A673 (cell line): ENCODE measurements at regions of chr17 and their contacts with region 1.

Region 1: DNA sequence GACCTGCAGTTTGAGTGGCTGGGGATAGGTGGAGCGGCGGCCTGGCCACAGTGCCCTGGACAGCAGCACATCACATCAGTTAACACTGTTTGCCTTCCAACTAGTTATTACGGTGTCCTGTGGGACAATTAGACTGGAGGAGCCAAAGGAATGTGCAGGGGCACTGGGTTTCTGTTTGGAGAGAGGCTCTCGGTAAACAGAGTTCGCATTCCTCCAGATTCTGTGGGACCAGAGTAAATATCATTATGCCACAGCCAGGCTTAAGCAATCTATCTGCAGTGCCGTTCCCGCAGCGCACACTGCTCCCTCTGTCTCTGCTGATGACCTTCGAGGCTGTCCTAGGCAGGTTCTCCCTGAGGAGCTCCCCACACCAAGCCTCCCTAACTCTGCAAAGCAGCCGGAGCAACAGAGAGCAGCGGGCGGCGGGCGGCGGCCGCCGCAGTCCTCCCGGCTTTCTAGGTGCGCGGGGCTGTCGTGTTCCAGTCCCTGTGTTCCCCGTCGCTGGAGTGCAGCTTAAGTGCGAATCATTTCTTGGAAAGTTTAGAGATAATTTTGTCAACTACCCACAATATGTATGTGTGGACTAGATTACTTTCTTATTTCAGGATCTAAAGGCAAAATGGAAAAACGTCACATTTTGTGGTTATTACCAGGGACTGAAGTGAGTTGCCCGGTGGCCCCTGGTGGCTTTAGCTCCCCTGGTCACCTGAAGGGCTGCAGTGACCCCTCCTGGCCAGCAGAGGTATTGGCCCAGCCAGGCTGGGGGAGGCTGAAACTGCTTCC is 43.2 kb downstream of the PGS1 start:
- DNase-seq: peak; percentile 64
- H3K4me3 ChIP-seq: no peak overlapping the region
- H3K27ac ChIP-seq: no peak overlapping the region
- H3K4me1 ChIP-seq: peaks cover 16% of the 10 kb centered on the region
- H3K27me3 ChIP-seq: no peaks in the 10 kb centered on the region
- CTCF ChIP-seq: peak; percentile 95

Region 2: DNA sequence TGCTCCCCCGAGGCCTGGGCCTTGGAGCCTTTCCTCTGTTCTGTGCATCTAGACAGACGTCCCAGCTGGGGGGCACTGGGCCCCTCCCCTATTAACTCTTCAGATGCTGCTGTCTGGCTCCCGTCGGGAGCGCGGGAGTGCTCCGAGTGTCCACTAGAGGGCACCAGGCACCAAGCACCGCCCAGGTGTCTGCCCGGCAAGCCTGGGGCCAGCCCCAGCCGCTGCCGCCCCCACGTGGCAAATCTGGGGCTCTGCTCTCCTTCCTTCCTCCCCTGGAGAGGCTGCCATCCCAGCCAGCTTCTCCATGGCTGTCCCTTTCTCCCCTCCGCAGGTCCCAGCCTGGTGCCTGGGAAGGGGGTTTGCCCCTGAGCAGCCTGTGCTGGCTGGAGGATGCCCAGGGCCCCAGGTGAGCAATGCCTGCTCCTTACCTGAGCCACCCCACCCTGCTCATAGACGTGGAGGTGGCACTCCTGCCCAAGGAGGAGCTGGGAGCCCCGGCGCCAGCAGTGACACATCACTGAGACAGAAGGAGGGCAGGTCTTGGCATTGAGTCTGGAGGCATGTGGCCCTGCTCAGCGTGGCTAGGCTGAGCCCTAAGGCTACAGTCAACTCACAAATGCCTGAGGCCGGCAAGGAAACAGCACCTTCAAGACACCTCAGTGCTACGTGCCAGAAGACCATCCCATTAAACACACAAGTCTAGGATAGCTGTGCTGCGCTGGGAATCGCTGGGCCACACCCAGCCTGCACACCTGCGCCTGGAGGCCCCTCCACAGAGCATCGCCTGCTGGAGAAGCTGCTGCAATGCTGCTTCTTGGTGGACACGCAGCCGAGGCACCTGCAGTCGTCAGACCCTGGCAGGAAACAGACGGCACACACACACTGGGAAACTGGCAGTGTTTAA is 170.5 kb before region 1 on chr17:
- CTCF ChIA-PET with region 1: interaction called, 7 read pairs
- POLR2A ChIA-PET with region 1: no interaction called
- intact Hi-C with region 1: loop called (anchors 5 kb)
- DNase-seq: peak; percentile 91
- H3K4me3 ChIP-seq: no peak overlapping the region
- H3K27ac ChIP-seq: no peak overlapping the region
- H3K4me1 ChIP-seq: no peaks in the 10 kb centered on the region
- H3K27me3 ChIP-seq: no peaks in the 10 kb centered on the region
- CTCF ChIP-seq: peak; percentile 100

Region 3: GRCh38 chr17:78289802-78290363 is 131.8 kb before region 1 on chr17:
- CTCF ChIA-PET with region 1: interaction called, 5 read pairs
- POLR2A ChIA-PET with region 1: no interaction called
- intact Hi-C with region 1: loop called (anchors 5 kb)
- DNase-seq: peak; percentile 90
- H3K4me3 ChIP-seq: no peak overlapping the region
- H3K27ac ChIP-seq: no peak overlapping the region
- H3K4me1 ChIP-seq: no peaks in the 10 kb centered on the region
- H3K27me3 ChIP-seq: no peaks in the 10 kb centered on the region
- CTCF ChIP-seq: peak; percentile 89

Region 4: DNA sequence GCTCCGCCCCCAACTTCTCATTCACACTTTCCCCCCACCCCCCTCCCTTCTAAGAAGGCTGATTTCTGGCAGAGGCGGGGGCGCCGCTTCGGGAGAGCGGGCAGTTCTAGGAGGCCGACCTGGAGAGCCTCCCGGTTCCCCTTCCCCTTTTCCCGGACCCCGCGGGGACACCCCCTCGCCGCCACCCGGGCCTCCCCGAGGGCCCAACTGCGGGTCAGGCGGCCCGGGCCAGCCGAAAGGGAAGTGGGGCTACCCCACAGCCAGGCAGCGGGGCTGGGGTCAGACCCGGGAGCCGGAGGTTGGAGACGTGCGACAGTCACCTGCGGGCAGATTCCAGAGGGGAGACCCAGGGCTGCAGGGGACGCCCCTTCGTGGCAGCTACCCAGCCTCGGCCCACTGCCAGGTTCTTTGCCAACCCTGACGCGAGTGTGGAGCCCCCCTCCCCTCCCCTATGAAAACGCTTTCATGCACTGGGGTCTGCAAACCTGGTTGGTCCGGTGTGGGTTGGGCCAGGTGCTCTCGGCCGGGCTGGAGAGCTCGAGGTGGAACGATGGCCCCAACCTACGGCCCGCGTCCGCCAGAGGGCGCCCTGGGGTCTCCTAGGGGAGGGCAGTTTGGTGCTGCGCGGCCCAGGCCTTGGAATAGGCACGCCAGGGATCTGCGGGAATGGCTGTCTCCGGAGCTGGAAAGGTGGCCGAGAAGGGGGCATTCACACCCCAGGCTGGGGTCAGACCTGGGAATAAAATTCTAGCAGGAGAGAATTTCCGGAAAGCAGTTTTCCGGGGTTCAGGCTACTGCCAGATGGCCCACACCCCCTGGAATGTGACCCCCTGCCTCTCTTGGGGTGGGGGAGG is 61.1 kb before region 1 on chr17:
- CTCF ChIA-PET with region 1: interaction called, 11 read pairs
- POLR2A ChIA-PET with region 1: no interaction called
- intact Hi-C with region 1: loop called (anchors 2 kb)
- DNase-seq: peak; percentile 87
- H3K4me3 ChIP-seq: peak overlapping the region; percentile 88
- H3K27ac ChIP-seq: peak overlapping the region; percentile 78
- H3K4me1 ChIP-seq: peaks cover 19% of the 10 kb centered on the region
- H3K27me3 ChIP-seq: no peaks in the 10 kb centered on the region
- CTCF ChIP-seq: peak; percentile 92